ENCODE measurements at regions of chr4 and their contacts with region 1.

Region 1: GRCh38 chr4:184263910-184264732 is 46.4 kb upstream of the ENPP6 start:
- DNase-seq: peak; percentile 97
- H3K4me3 ChIP-seq: no peak overlapping the region
- H3K27ac ChIP-seq: peak overlapping the region; percentile 32
- H3K4me1 ChIP-seq: peaks cover 55% of the 10 kb centered on the region
- CTCF ChIP-seq: peak; percentile 97

Region 2: GRCh38 chr4:184282251-184282713 is 18.2 kb after region 1 on chr4:
- CTCF ChIA-PET with region 1: interaction called, 16 read pairs
- POLR2A ChIA-PET with region 1: interaction called, 283 read pairs
- intact Hi-C with region 1: loop called (anchors 1 kb)
- DNase-seq: peak; percentile 87
- H3K4me3 ChIP-seq: peak overlapping the region; percentile 50
- H3K27ac ChIP-seq: peak overlapping the region; percentile 96
- H3K4me1 ChIP-seq: peaks cover 80% of the 10 kb centered on the region
- CTCF ChIP-seq: peak; percentile 66

Region 3: DNA sequence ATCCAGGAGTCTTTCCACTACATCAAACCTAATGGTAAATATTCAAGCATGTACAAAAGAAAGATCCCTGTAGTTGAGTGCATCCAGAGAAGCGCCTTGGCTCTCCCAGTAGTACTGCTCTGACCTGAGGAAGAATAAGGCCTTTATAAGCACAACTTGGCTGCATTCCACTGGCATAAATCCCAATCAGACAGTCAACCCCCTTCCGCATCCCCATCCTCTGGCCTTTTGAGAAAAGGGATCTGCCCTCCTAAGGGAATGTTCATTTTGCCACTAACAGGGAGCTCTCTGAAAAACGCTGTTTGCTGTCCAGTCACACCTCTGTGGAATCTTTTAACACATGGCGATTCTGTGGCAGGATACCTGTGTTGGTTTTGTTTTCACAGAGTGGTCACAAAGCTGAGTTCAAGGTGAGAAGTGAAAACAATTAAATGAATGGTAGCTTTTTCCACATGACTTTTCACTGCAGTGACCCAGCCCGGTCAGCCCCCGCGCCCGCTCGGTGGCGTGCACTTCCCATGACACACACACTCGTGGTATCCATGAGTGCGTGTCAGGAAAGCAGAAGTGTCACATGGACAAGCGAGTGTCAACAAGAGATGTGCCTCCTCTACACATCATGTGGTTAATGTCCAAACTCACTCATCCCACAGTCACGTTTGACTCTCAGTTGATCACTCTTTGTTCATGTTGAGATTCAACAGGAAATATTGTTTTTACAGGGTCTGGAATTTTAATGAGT is 65.7 kb after region 1 on chr4:
- CTCF ChIA-PET with region 1: no interaction called
- POLR2A ChIA-PET with region 1: interaction called, 36 read pairs
- intact Hi-C with region 1: loop called (anchors 5 kb)
- DNase-seq: no peak
- H3K4me3 ChIP-seq: no peak overlapping the region
- H3K27ac ChIP-seq: peak overlapping the region; percentile 82
- H3K4me1 ChIP-seq: peaks cover 77% of the 10 kb centered on the region
- CTCF ChIP-seq: no peak

Region 4: GRCh38 chr4:184384056-184384809 is 120.1 kb after region 1 on chr4:
- CTCF ChIA-PET with region 1: no interaction called
- POLR2A ChIA-PET with region 1: interaction called, 5 read pairs
- intact Hi-C with region 1: loop called (anchors 2 kb)
- DNase-seq: peak; percentile 92
- H3K4me3 ChIP-seq: peak overlapping the region; percentile 45
- H3K27ac ChIP-seq: peak overlapping the region; percentile 29
- H3K4me1 ChIP-seq: peaks cover 70% of the 10 kb centered on the region
- CTCF ChIP-seq: no peak

Region 5: GRCh38 chr4:184583738-184584502 is 319.8 kb after region 1 on chr4:
- CTCF ChIA-PET with region 1: no interaction called
- POLR2A ChIA-PET with region 1: no interaction called
- intact Hi-C with region 1: loop called (anchors 2 kb)
- DNase-seq: peak; percentile 11
- H3K4me3 ChIP-seq: no peak overlapping the region
- H3K27ac ChIP-seq: no peak overlapping the region
- H3K4me1 ChIP-seq: peaks cover 5% of the 10 kb centered on the region
- CTCF ChIP-seq: no peak

Region 6: DNA sequence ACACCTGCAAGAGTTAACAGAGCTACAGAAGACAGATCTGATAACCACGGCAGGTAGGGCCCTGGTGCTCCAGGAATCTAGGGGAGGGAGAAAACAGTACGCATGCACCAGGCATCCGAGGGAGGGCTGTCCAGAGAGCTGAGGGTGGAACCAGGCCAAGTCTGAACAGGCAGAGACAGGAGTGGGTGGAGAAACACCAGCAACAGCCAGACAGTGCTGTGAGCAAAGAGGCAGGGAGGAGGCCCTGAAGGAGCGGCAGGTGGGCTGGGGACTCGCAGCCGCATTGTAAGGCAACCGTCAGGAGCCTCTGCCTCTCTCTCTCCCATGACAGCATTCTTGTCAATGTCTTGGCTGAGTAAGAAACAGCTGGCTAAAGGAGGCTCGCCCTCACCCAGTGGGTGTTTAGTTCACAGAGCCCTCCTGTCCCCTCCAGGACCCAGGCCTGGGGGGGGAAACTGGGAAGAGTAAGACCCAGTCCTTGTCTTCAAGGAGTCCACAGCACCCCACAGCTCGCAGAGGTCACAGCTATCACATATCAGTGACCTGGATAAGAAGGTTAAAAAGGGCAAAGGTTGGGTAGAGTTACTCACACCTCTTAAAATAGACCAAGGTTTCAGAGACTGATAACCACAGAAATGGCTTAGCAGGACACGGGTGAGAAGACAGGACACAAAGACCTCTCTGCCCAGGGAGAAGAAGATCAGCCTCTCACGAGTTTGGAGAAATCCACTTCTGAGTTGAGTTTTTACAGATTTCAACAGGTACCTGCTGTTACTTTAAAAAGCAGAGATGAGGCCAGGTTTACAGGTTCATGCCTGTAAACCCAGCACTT is 551.1 kb after region 1 on chr4:
- CTCF ChIA-PET with region 1: no interaction called
- POLR2A ChIA-PET with region 1: no interaction called
- intact Hi-C with region 1: loop called (anchors 5 kb)
- DNase-seq: peak; percentile 76
- H3K4me3 ChIP-seq: peak overlapping the region; percentile 49
- H3K27ac ChIP-seq: peak overlapping the region; percentile 84
- H3K4me1 ChIP-seq: peaks cover 68% of the 10 kb centered on the region
- CTCF ChIP-seq: no peak